SK-N-SH (cell line): ENCODE measurements at regions of chr17 and their contacts with region 1.

Region 1: GRCh38 chr17:47720754-47721533 is 12.1 kb upstream of the TBX21 start:
- DNase-seq: peak; percentile 70
- H3K4me3 ChIP-seq: no peak overlapping the region
- H3K27ac ChIP-seq: no peak overlapping the region
- H3K4me1 ChIP-seq: peaks cover 7 to 27% of the 10 kb centered on the region in 2 experiments; a peak in 3 of 4 replicates
- H3K27me3 ChIP-seq: peaks cover 77% of the 10 kb centered on the region
- CTCF ChIP-seq: peak; percentile 25
- EP300 ChIP-seq: no peak
- RAD21 ChIP-seq: no peak

Region 2: DNA sequence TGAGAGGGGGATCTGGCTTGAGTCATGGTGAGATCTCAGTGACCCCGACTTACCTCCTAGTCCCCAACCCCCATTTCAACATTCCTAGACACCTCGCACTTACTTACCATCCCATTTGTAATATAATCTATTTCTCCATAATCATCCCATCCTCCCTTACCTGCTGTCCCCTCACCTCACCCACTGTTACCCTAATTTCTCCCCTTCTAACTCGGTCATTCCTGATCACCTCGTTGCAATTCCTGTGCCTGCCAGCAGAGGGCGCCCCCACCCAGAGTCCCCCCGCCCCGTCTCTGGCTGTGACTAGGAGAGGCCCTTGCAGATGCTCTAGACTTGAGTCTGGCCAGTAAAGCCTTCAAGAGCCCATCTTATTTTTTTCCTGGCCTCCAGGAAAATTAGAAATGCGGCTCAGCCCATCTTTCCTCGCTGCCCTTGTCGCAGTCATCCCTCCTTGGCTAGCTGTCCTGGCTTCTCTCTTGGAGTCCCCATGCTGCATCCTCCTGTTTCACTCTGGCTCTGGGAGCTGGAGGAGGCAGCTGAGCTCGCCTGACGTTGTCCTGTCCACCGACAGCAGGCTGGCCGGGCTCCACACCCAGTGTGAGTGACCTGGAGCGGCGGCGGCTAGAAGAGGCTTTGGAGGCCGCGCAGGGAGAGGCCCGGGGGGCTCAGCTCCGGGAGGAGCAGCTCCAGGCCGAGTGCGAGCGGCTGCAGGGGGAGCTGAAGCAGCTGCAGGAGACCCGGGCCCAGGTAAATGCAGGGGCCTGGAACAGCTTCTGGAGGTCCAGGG is 22.0 kb before region 1 on chr17:
- CTCF ChIA-PET with region 1: interaction called, 195 read pairs
- POLR2A ChIA-PET with region 1: no interaction called
- DNase-seq: peak; percentile 98
- H3K4me3 ChIP-seq: no peak overlapping the region; a peak in 1 of 4 replicates
- H3K27ac ChIP-seq: no peak overlapping the region
- H3K4me1 ChIP-seq: peaks cover 5 to 10% of the 10 kb centered on the region in 2 experiments; a peak in 1 of 4 replicates
- H3K27me3 ChIP-seq: no peaks in the 10 kb centered on the region
- CTCF ChIP-seq: peak; percentile 100
- EP300 ChIP-seq: no peak
- RAD21 ChIP-seq: peak; percentile 78

Region 3: GRCh38 chr17:47733047-47733673 is 12.2 kb after region 1 on chr17 and contains the start of gene TBX21:
- CTCF ChIA-PET with region 1: interaction called, 22 read pairs
- POLR2A ChIA-PET with region 1: no interaction called
- DNase-seq: peak; percentile 93
- H3K4me3 ChIP-seq: peak within 1 kb of the TSS; percentile 25 to 31; a peak in 3 of 4 replicates
- H3K27ac ChIP-seq: no peak within 1 kb of the TSS
- H3K4me1 ChIP-seq: peaks cover 0 to 10% of the 10 kb centered on the region in 2 experiments; a peak in 1 of 4 replicates
- H3K27me3 ChIP-seq: peaks cover 87% of the 10 kb centered on the region
- CTCF ChIP-seq: peak; percentile 40
- EP300 ChIP-seq: no peak
- RAD21 ChIP-seq: 0 out of 2 replicates have a peak, but pooled peaks have one; percentile 16
- polyA plus RNA-seq, gene TBX21: not detected in 2 replicates

Region 4: GRCh38 chr17:47742319-47743181 is 21.6 kb after region 1 on chr17:
- CTCF ChIA-PET with region 1: interaction called, 43 read pairs
- POLR2A ChIA-PET with region 1: no interaction called
- DNase-seq: peak; percentile 95
- H3K4me3 ChIP-seq: no peak overlapping the region; a peak in 1 of 4 replicates
- H3K27ac ChIP-seq: no peak overlapping the region
- H3K4me1 ChIP-seq: peaks cover 0 to 6% of the 10 kb centered on the region in 2 experiments; a peak in 1 of 4 replicates
- H3K27me3 ChIP-seq: peaks cover 86% of the 10 kb centered on the region
- CTCF ChIP-seq: peak; percentile 61
- EP300 ChIP-seq: no peak
- RAD21 ChIP-seq: peak; percentile 88

Region 5: GRCh38 chr17:47810901-47811778 is 90.2 kb after region 1 on chr17:
- CTCF ChIA-PET with region 1: no interaction called
- POLR2A ChIA-PET with region 1: no interaction called
- DNase-seq: peak; percentile 11
- H3K4me3 ChIP-seq: no peak overlapping the region
- H3K27ac ChIP-seq: peak overlapping the region in 1 of 2 experiments; percentile 52; a peak in 1 of 4 replicates
- H3K4me1 ChIP-seq: no peaks in the 10 kb centered on the region
- H3K27me3 ChIP-seq: no peaks in the 10 kb centered on the region
- CTCF ChIP-seq: no peak
- EP300 ChIP-seq: no peak
- RAD21 ChIP-seq: no peak